Posterior vena cava (tissue), 2 donors: ENCODE measurements at regions of chr6 and their contacts with region 1.

Region 1: GRCh38 chr6:127566651-127567050 is 10.3 kb upstream of the C6orf58 start:
- DNase-seq: no peak

Region 2: DNA sequence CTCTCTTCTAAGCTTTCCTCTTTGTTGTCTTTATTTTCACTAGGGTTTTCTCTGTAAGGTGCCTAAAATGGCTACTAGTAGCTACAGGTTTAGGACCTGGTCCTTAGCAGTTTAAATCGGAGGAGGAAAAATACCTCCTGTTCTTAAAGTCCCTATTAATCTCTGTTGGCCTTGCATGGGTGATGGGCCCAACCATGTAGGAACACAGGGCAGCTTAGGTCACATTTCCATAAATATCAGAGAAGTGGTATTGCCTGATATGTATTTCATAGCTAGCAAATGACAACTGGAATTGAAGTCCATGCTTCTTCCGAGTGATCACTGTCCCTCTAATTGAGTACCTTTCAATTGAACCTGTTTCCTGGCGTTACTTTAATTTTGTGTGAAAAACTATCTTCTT is 1386.3 kb after region 1 on chr6:
- intact Hi-C with region 1: loop called in 1 of 2 experiments (anchors 5 kb)
- DNase-seq: no peak